ENCODE measurements at regions of chr10 and their contacts with region 1.

Region 1: DNA sequence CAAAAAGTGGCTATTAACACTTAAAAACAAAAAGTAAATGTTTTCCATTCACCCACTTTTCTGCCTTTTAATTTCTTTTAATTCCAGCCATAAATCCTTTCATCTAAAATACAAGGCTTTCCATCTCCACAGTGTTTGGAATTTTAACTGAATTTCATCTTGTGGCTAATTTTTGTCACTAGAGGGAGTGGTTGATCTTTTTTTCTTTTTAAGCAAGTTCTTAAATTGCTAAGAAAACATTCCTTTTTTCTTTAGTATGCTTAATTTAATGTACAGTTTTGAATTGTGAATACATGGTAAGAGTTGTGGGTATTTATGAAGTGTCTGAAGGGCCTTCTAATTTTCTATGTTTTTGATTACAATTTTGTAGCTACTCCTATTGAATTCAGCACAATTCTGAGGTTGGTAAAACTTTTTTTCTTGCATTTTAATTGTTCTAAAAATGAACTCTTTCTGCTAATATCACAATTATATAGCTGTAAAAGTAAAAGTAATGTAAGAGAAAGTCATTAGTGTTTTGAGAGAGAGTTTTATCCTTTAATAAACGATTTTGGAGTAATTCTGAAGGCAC is 54.9 kb upstream of the ANK3 start:
- DNase-seq: peak in 1 of 4 donors; percentile 34
- ATAC-seq: no peak
- H3K4me3 ChIP-seq: no peak overlapping the region
- H3K27ac ChIP-seq: no peak overlapping the region
- H3K4me1 ChIP-seq: peaks cover 5 to 10% of the 10 kb centered on the region in 2 donors
- H3K27me3 ChIP-seq: no peaks in the 10 kb centered on the region
- CTCF ChIP-seq: peak in 1 of 2 donors; percentile 50

Region 2: DNA sequence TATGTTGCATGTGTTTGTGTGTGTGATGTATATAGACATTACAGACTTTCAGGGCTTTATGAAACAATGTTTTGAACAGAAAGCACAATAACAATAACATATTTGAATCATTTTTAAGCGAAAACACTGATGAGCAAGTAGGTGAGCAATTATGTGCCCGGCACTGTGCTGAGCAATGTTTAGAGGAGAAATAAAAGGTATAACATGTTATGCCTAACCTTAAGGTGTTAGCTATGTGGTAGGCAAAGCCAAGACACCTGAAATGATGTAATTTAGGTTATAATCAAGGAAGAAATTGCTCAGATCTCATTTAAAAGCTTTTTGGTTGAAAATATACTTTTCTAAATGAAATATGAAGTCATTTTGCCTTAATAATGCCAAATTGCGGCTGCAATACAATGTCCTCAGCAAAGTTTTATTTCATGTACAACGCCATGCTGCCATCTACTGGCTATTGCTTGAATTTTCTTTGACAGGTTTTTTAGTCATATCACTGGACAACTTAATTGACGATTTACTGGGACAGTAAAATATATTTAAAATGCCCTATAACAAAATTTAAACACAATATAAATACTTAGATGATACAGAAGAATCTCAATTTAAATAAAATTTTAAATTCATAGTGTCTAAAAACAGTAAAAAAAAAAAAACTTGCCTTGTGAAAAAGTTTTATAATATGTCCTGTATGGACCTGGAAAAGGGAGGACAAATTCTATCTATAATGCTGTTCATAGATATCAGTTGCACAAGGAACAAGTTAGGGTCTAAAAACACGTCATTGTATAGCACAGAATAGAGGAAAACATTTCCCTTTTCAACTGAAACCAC is 202.6 kb after region 1 on chr10:
- intact Hi-C with region 1: loop called in 1 of 2 experiments (anchors 5 kb)
- DNase-seq: peak in 2 of 4 donors; percentile 51 to 77
- ATAC-seq: peak; percentile 72
- H3K4me3 ChIP-seq: no peak overlapping the region
- H3K27ac ChIP-seq: no peak overlapping the region
- H3K4me1 ChIP-seq: no peaks in the 10 kb centered on the region
- H3K27me3 ChIP-seq: no peaks in the 10 kb centered on the region
- CTCF ChIP-seq: peak; percentile 66 to 83